Naive thymus-derived CD8-positive, alpha-beta T cell (primary cell): ENCODE measurements at regions of chr7 and their contacts with region 1.

Region 1: GRCh38 chr7:102412548-102412947 is 16.4 kb downstream of the PRKRIP1 start:
- DNase-seq: peak; percentile 29 to 68 (median 52)
- ATAC-seq: peak in 1 of 2 donors; percentile 48
- H3K4me3 Mint-ChIP-seq: no peak overlapping the region
- H3K27ac Mint-ChIP-seq: peak overlapping the region in 9 of 10 donors; percentile 25 to 97 (median 79)
- H3K4me1 Mint-ChIP-seq: peaks cover 16 to 66% (median 34%) of the 10 kb centered on the region in 4 donors
- H3K27me3 Mint-ChIP-seq: no peaks in the 10 kb centered on the region

Region 2: GRCh38 chr7:102152672-102153585 is 259.6 kb before region 1 on chr7:
- POLR2A ChIA-PET with region 1: no interaction called
- DNase-seq: no peak
- ATAC-seq: no peak
- H3K4me3 Mint-ChIP-seq: no peak overlapping the region
- H3K27ac Mint-ChIP-seq: peak overlapping the region in 1 of 10 donors; percentile 90
- H3K4me1 Mint-ChIP-seq: peaks cover 0 to 2% (median 0%) of the 10 kb centered on the region in 4 donors
- H3K27me3 Mint-ChIP-seq: no peaks in the 10 kb centered on the region

Region 3: DNA sequence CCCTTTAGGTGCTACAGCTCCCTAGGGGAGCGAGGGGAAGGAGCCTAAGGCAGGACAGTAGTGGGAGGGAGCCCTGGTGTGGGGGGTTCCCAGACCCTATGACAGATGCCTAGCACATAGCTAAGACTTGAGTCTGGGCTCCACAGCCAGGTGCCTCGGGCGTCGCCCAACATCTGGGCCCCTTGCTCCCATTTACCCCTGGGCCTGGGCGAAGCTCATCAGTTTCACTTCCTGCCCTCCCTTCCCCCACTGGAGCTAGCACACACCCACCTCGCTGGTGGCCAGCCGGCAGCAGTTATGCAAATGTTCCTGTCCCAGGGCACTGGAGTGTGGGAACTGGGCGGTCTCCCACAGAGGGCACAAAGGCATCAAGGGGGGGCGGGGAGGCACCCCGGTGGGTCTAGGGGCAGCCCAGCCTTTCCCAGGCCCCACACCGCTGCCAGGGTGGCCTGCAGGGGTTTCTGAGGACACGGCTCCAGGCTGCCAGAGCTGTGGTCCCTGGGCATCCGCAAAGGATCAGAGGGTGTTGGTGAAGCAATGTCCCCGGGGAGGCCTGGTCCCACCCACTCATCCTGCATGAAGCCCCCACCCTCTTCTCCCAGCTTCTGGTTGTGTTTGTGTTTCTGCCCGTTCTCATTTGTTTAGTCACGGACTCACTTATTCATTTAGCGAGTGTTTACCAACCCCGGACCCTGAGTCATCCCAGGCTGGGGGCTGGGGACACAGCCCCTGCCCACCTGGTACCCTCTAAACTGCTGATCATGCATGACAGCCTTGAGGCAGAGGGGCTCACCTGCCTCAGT is 105.5 kb before region 1 on chr7:
- POLR2A ChIA-PET with region 1: no interaction called
- DNase-seq: peak in 1 of 10 donors; percentile 40
- ATAC-seq: peak; percentile 29 to 59
- H3K4me3 Mint-ChIP-seq: peak overlapping the region in 2 of 10 donors; percentile 10 to 19
- H3K27ac Mint-ChIP-seq: no peak overlapping the region
- H3K4me1 Mint-ChIP-seq: peaks cover 0 to 42% (median 5%) of the 10 kb centered on the region in 4 donors
- H3K27me3 Mint-ChIP-seq: no peaks in the 10 kb centered on the region

Region 4: GRCh38 chr7:102396027-102397019 is 16.2 kb before region 1 on chr7 and contains the start of gene PRKRIP1:
- POLR2A ChIA-PET with region 1: interaction called, 11 read pairs
- DNase-seq: peak; percentile 73 to 95 (median 90)
- ATAC-seq: peak; percentile 97 to 99
- H3K4me3 Mint-ChIP-seq: peak within 1 kb of the TSS; percentile 89 to 99 (median 95)
- H3K27ac Mint-ChIP-seq: peak within 1 kb of the TSS; percentile 86 to 99 (median 96)
- H3K4me1 Mint-ChIP-seq: peaks cover 16 to 28% (median 23%) of the 10 kb centered on the region in 4 donors
- H3K27me3 Mint-ChIP-seq: no peaks in the 10 kb centered on the region
- polyA plus RNA-seq, gene PRKRIP1: 13.4 to 27.0 (median 17.7) TPM

Region 5: GRCh38 chr7:102433219-102434038 is 20.9 kb after region 1 on chr7 and contains the start of gene ORAI2:
- POLR2A ChIA-PET with region 1: interaction called, 449 read pairs
- DNase-seq: peak; percentile 82 to 92 (median 85)
- ATAC-seq: peak; percentile 55 to 67
- H3K4me3 Mint-ChIP-seq: peak within 1 kb of the TSS; percentile 78 to 93 (median 88)
- H3K27ac Mint-ChIP-seq: peak within 1 kb of the TSS; percentile 99 to 100 (median 100)
- H3K4me1 Mint-ChIP-seq: peaks cover 25 to 69% (median 59%) of the 10 kb centered on the region in 4 donors
- H3K27me3 Mint-ChIP-seq: no peaks in the 10 kb centered on the region
- polyA plus RNA-seq, gene ORAI2: 35.9 to 54.4 (median 37.2) TPM

Region 6: GRCh38 chr7:102440078-102440795 is 27.7 kb after region 1 on chr7:
- POLR2A ChIA-PET with region 1: interaction called, 449 read pairs
- DNase-seq: no peak
- ATAC-seq: no peak
- H3K4me3 Mint-ChIP-seq: no peak overlapping the region
- H3K27ac Mint-ChIP-seq: no peak overlapping the region
- H3K4me1 Mint-ChIP-seq: peaks cover 4 to 33% (median 11%) of the 10 kb centered on the region in 4 donors
- H3K27me3 Mint-ChIP-seq: no peaks in the 10 kb centered on the region

Region 7: DNA sequence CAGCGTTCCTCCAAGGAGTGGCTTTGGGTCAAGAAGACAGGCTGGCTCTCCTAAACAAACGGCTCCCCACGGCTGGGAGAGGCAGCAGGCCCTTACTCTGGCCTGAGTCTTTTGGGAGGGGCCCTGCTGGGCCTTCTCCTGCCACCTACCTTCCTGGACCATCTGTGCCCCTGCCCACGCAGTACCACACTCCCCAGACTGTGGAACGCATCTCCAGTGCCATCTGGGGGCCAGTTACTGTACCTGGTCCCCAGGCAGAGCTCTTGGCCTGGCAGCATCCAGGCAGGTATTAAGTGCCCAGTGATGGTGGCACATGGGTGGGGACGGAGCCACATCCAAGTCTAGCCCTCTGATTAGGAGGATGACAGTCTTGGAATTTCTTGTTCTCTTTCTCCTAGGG is 37.7 kb after region 1 on chr7:
- POLR2A ChIA-PET with region 1: interaction called, 17 read pairs
- DNase-seq: peak; percentile 39 to 83 (median 52)
- ATAC-seq: peak; percentile 95 to 97
- H3K4me3 Mint-ChIP-seq: no peak overlapping the region
- H3K27ac Mint-ChIP-seq: peak overlapping the region in 8 of 10 donors; percentile 47 to 84 (median 56)
- H3K4me1 Mint-ChIP-seq: peaks cover 5 to 9% (median 6%) of the 10 kb centered on the region in 4 donors
- H3K27me3 Mint-ChIP-seq: no peaks in the 10 kb centered on the region

Region 8: DNA sequence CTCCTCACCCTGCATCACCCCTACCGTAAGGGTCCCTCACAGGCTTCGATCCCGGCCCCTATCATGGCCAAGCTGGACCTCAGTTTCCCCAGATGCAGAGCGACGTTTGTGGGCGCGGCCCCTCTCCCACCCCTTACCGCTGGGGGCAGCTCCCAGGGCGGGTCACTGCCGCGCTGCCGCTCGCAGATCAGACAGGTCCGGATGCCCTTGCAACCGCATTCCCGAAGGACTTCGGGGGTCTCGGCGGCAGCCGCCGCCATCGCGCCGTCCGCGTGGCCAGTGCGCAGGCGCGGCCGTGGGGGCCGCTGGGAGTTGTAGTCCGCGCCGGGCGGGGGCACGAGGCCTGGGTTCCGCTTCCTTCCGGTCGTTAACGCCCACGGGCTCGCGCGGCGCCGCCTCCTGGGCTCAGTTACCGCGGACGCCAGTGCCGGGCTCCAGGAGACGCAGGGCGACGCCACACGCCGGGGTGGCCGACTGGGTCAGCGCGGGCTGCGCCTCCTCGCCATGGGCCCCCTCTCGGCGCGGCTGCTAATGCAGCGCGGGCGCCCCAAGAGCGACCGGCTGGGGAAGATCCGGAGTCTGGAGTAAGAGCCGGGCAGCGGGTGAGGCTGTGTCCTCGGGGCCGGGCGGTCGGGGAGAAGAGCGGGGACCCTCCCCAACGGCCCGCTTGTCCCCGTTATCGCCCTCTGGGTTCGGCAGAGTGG is 52.2 kb after region 1 on chr7 and contains the starts of genes ALKBH4 and LRWD1:
- POLR2A ChIA-PET with region 1: interaction called, 18 read pairs
- DNase-seq: peak; percentile 86 to 96 (median 92)
- ATAC-seq: peak; percentile 95 to 96
- H3K4me3 Mint-ChIP-seq: peak within 1 kb of the TSS; percentile 83 to 95 (median 88)
- H3K27ac Mint-ChIP-seq: peak within 1 kb of the TSS; percentile 80 to 94 (median 85)
- H3K4me1 Mint-ChIP-seq: peaks cover 12 to 47% (median 35%) of the 10 kb centered on the region in 4 donors
- H3K27me3 Mint-ChIP-seq: no peaks in the 10 kb centered on the region
- polyA plus RNA-seq, gene ALKBH4: 14.8 to 17.3 (median 16.4) TPM
- polyA plus RNA-seq, gene LRWD1: 7.2 to 14.5 (median 11.4) TPM